Tibial artery (tissue), 4 donors: ENCODE measurements at regions of chr20 and their contacts with region 1.

Region 1: GRCh38 chr20:50233721-50234135 is 43.1 kb downstream of the CEBPB start:
- DNase-seq: no peak
- H3K4me3 ChIP-seq: no peak overlapping the region
- H3K27ac ChIP-seq: no peak overlapping the region
- H3K4me1 ChIP-seq: peaks cover 0 to 11% (median 0%) of the 10 kb centered on the region in 4 donors
- H3K27me3 ChIP-seq: peaks cover 0 to 4% of the 10 kb centered on the region in 2 donors
- CTCF ChIP-seq: no peak

Region 2: GRCh38 chr20:50278674-50279531 is 45.2 kb after region 1 on chr20:
- intact Hi-C with region 1: loop called (anchors 5 kb)
- DNase-seq: peak; percentile 86 to 96
- H3K4me3 ChIP-seq: no peak overlapping the region
- H3K27ac ChIP-seq: peak overlapping the region; percentile 65 to 72
- H3K4me1 ChIP-seq: peaks cover 0 to 45% (median 34%) of the 10 kb centered on the region in 4 donors
- H3K27me3 ChIP-seq: no peaks in the 10 kb centered on the region
- CTCF ChIP-seq: peak; percentile 60 to 66